CD14-positive monocyte (primary cell): ENCODE measurements at regions of chr1 and their contacts with region 1.

Region 1: GRCh38 chr1:174022080-174022975 is at the start of gene RC3H1:
- DNase-seq: peak; percentile 90 to 94 (median 92)
- H3K4me3 ChIP-seq: peak within 1 kb of the TSS; percentile 66 to 96 (median 81)
- H3K4me3 Mint-ChIP-seq: peak within 1 kb of the TSS; percentile 93 to 100
- H3K27ac ChIP-seq: peak within 1 kb of the TSS; percentile 83 to 99
- H3K27ac Mint-ChIP-seq: peak within 1 kb of the TSS; percentile 97 to 100 (median 99)
- H3K4me1 ChIP-seq: peaks cover 40 to 58% of the 10 kb centered on the region in 2 donors
- H3K4me1 Mint-ChIP-seq: peaks cover 46% of the 10 kb centered on the region
- H3K27me3 ChIP-seq: no peaks in the 10 kb centered on the region
- H3K27me3 Mint-ChIP-seq: no peaks in the 10 kb centered on the region
- CTCF ChIP-seq: no peak
- polyA plus RNA-seq, gene RC3H1: 3.8 to 17.3 (median 7.8) TPM

Region 2: GRCh38 chr1:173476664-173477285 is 545.6 kb before region 1 on chr1:
- intact Hi-C with region 1: loop called in 1 of 2 experiments (anchors 5 kb)
- DNase-seq: peak; percentile 84 to 88 (median 87)
- H3K4me3 ChIP-seq: peak overlapping the region; percentile 77 to 92 (median 86)
- H3K4me3 Mint-ChIP-seq: peak overlapping the region; percentile 92 to 93
- H3K27ac ChIP-seq: peak overlapping the region; percentile 84 to 97
- H3K27ac Mint-ChIP-seq: peak overlapping the region; percentile 94 to 98 (median 97)
- H3K4me1 ChIP-seq: peaks cover 37 to 45% of the 10 kb centered on the region in 2 donors
- H3K4me1 Mint-ChIP-seq: peaks cover 52% of the 10 kb centered on the region
- H3K27me3 ChIP-seq: no peaks in the 10 kb centered on the region
- H3K27me3 Mint-ChIP-seq: peaks cover 0 to 4% (median 1%) of the 10 kb centered on the region in 3 donors
- CTCF ChIP-seq: no peak

Region 3: GRCh38 chr1:173867753-173868265 is 154.5 kb before region 1 on chr1 and contains the start of gene GAS5:
- intact Hi-C with region 1: loop called in 1 of 2 experiments (anchors 2 kb)
- DNase-seq: peak; percentile 96 to 98 (median 98)
- H3K4me3 ChIP-seq: peak within 1 kb of the TSS; percentile 89 to 96 (median 94)
- H3K4me3 Mint-ChIP-seq: peak within 1 kb of the TSS; percentile 98 to 99
- H3K27ac ChIP-seq: peak within 1 kb of the TSS; percentile 86 to 91
- H3K27ac Mint-ChIP-seq: peak within 1 kb of the TSS; percentile 91 to 97 (median 96)
- H3K4me1 ChIP-seq: peaks cover 22 to 32% of the 10 kb centered on the region in 2 donors
- H3K4me1 Mint-ChIP-seq: peaks cover 50% of the 10 kb centered on the region
- H3K27me3 ChIP-seq: no peaks in the 10 kb centered on the region
- H3K27me3 Mint-ChIP-seq: peaks cover 0 to 2% (median 0%) of the 10 kb centered on the region in 3 donors
- CTCF ChIP-seq: no peak
- polyA plus RNA-seq, gene GAS5: 90.4 to 309 (median 92.0) TPM

Region 4: DNA sequence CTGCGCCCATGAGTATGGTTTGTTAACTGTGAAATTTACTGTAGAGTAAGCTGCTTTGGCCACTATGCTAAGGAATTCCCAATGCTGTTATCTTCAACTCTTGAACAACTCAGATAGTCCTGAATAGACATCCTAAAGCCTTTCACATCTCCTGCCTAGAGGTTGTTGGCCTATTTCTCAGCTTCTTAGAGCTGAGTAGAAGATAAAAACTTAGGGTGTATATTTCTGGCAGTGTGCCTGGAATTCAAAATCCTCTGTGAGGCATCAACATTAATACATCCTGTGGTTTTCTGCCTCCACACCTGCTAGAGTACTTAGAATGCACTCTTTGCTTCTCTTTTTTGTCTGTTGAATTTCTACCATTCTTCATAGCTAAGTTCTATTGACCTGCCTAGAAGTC is 45.7 kb after region 1 on chr1:
- intact Hi-C with region 1: no loop called
- DNase-seq: no peak
- H3K4me3 ChIP-seq: no peak overlapping the region
- H3K4me3 Mint-ChIP-seq: no peak overlapping the region
- H3K27ac ChIP-seq: no peak overlapping the region
- H3K27ac Mint-ChIP-seq: no peak overlapping the region
- H3K4me1 ChIP-seq: no peaks in the 10 kb centered on the region
- H3K4me1 Mint-ChIP-seq: no peaks in the 10 kb centered on the region
- H3K27me3 ChIP-seq: no peaks in the 10 kb centered on the region
- H3K27me3 Mint-ChIP-seq: peaks cover 0 to 5% (median 3%) of the 10 kb centered on the region in 3 donors
- CTCF ChIP-seq: no peak

Region 5: DNA sequence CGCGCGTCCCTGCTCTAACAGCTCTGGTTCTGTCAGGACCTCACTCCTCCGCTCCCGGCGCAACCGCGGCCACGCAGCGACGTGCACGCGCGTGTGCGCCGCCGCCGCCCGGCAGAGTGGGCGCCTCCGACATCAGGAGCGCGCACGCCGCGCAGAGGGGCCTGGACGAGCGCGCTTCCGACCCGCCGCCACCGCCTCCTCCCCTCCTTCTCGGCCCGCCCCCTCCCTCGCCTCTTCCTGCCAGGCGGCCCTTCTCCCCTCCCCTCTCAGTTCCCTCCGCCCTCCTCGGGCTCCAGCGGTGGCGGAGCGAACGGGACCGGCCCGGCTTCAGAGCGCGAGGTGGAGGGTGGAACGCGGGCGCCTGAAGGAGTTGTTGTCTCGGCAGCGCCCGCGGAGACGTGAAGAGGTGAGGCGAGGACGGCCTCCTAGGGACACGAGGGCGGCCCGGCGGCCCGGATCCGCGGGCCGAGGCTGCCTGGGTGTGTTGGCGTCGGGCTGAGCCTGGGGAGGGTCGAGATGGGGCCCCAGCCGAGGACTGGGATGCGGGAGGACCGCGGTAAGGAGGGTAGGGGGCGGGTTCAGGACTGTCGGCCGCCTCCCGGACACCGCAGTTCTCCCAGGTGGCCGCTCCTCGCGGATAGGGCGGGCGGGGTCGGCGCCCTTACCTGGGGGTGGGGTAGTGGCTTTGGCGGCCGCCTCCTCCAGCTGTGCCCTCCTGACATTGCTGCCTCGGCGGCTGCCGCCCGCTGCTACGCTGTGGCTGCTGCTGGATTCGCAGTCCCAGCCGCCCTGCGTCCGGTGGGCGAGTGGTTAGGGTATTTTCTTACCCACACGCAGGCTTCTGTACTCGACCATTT is 137.2 kb after region 1 on chr1 and contains the start of gene RABGAP1L:
- intact Hi-C with region 1: loop called (anchors 10 kb)
- DNase-seq: peak; percentile 86 to 91 (median 86)
- H3K4me3 ChIP-seq: peak within 1 kb of the TSS; percentile 49 to 89 (median 79)
- H3K4me3 Mint-ChIP-seq: peak within 1 kb of the TSS; percentile 95 to 99
- H3K27ac ChIP-seq: peak within 1 kb of the TSS; percentile 43 to 80
- H3K27ac Mint-ChIP-seq: peak within 1 kb of the TSS; percentile 71 to 92 (median 83)
- H3K4me1 ChIP-seq: peaks cover 12 to 20% of the 10 kb centered on the region in 2 donors
- H3K4me1 Mint-ChIP-seq: peaks cover 30% of the 10 kb centered on the region
- H3K27me3 ChIP-seq: no peaks in the 10 kb centered on the region
- H3K27me3 Mint-ChIP-seq: no peaks in the 10 kb centered on the region
- CTCF ChIP-seq: no peak
- polyA plus RNA-seq, gene RABGAP1L: 35.2 to 75.3 (median 63.3) TPM

Region 6: DNA sequence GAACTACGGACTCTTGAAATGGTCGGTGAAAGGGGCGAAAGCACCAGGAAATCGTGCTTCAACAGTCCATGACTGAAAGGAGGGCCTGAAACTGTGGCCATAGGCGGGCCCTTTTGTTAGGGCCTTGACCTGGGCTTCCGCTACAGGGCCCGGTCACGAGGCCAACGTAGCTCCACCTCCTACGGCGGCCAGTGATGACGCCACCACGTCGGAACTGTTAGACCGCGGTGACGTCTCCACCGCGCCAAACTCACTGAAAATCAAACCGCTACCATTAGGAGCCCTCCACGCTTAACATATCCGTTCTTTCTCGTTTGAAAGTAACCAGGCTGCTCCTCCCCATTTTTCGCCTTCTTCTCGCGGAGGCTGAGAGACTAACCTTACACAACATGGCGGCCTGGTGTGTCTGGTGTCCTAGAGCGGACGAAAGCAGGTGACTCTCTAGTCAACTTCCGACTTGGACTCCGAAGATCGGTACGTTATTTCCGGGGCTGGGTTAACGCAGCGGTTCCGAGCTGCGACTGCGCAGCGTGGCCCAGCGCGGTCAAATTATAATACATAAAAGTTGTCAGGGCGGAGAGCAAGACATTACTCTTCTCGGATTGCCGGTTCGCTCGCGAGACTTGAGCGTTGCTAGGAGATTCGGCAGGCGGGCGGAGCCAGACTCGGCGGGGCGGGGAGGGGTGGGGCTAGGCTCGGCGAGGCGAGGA is 977.0 kb after region 1 on chr1:
- intact Hi-C with region 1: loop called (anchors 10 kb)
- DNase-seq: peak; percentile 99
- H3K4me3 ChIP-seq: peak overlapping the region; percentile 52 to 81 (median 75)
- H3K4me3 Mint-ChIP-seq: no peak overlapping the region
- H3K27ac ChIP-seq: peak overlapping the region; percentile 95 to 100
- H3K27ac Mint-ChIP-seq: no peak overlapping the region
- H3K4me1 ChIP-seq: peaks cover 27 to 39% of the 10 kb centered on the region in 2 donors
- H3K4me1 Mint-ChIP-seq: peaks cover 38% of the 10 kb centered on the region
- H3K27me3 ChIP-seq: no peaks in the 10 kb centered on the region
- H3K27me3 Mint-ChIP-seq: no peaks in the 10 kb centered on the region
- CTCF ChIP-seq: no peak